MCF 10A (cell line): ENCODE measurements at regions of chr6 and their contacts with region 1.

Region 1: DNA sequence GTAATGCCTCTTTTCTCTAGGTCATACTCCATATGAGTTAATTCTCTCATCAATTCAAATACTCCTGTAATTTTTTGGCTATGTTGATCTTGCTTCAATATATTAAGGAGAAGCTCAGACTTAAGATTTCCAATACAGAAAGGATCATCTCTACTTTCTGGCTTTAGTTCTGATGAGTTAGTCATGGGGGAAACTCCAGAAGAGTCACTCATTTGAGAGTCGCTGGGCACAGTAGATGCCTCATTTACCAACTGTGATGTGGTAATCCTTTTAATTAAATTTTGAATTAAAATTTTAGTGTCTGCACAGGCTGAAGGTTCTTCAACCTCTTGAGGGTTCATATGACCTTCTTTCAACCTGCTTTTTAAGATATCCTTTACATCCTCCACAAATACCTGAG is 38.5 kb downstream of the DST start:
- DNase-seq: no peak
- H3K4me3 Mint-ChIP-seq: no peak overlapping the region
- H3K27ac Mint-ChIP-seq: no peak overlapping the region
- H3K4me1 Mint-ChIP-seq: peaks cover 5% of the 10 kb centered on the region
- H3K27me3 Mint-ChIP-seq: no peaks in the 10 kb centered on the region
- CTCF ChIP-seq: no peak

Region 2: DNA sequence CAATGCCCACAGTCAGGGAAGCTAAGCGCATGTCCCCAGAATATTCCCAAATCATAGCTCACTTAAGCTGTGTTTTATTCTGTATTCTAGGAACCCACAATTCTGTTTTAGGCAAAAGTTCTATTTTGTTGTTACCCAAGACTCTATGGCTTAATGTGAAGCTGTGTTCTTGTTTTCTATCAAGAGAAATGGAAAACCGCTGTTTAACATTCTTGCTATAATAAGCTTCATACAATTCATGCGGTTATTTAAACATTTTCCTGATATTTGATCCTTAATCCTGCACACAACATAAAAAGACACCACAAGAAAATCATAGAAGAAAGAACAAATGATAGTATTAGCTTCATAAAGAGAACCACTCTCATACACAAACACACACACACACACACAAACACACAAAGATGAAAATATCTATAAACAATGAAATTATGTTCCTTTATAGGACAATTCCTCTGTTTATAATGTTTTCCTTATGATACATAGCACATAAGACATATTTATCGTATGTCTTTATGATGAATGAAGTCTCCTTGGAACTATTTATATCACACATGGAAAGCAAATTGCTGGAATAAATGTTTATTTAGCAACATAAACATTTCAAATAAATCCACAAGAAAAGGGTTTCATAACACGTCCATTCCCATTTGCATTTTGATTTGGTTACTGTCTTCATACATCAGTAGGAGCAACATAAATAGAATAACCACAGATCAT is 340.4 kb before region 1 on chr6:
- CTCF ChIA-PET with region 1: no interaction called
- POLR2A ChIA-PET with region 1: no interaction called
- intact Hi-C with region 1: no loop called
- DNase-seq: no peak
- H3K4me3 Mint-ChIP-seq: no peak overlapping the region
- H3K27ac Mint-ChIP-seq: no peak overlapping the region
- H3K4me1 Mint-ChIP-seq: peaks cover 16% of the 10 kb centered on the region
- H3K27me3 Mint-ChIP-seq: no peaks in the 10 kb centered on the region
- CTCF ChIP-seq: no peak

Region 3: DNA sequence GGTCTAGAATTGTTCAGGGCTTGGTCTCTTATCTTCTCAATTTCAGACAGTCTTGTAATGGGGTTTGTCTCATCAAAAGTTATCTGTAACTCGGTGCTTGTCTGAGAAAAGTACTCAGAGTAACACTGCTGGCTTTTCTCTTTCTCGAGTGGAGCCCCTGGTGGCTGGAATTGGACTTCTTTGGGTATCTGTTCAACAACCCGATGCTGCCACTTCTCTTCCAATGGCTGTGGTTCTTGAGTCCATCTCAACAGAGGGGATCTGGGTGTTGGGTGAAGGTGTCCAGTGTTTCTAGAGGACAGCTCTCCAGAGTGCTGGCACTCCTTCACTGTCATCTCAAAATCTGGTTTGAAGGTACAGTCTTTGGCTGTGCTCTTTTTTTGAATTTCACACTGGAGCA is 13.9 kb after region 1 on chr6:
- CTCF ChIA-PET with region 1: interaction called, 4 read pairs
- POLR2A ChIA-PET with region 1: interaction called, 20 read pairs
- intact Hi-C with region 1: no loop called
- DNase-seq: no peak
- H3K4me3 Mint-ChIP-seq: no peak overlapping the region
- H3K27ac Mint-ChIP-seq: no peak overlapping the region
- H3K4me1 Mint-ChIP-seq: no peaks in the 10 kb centered on the region
- H3K27me3 Mint-ChIP-seq: no peaks in the 10 kb centered on the region
- CTCF ChIP-seq: peak; percentile 14